CD4-positive, alpha-beta memory T cell (primary cell): ENCODE measurements at regions of chr15 and their contacts with region 1.

Region 1: DNA sequence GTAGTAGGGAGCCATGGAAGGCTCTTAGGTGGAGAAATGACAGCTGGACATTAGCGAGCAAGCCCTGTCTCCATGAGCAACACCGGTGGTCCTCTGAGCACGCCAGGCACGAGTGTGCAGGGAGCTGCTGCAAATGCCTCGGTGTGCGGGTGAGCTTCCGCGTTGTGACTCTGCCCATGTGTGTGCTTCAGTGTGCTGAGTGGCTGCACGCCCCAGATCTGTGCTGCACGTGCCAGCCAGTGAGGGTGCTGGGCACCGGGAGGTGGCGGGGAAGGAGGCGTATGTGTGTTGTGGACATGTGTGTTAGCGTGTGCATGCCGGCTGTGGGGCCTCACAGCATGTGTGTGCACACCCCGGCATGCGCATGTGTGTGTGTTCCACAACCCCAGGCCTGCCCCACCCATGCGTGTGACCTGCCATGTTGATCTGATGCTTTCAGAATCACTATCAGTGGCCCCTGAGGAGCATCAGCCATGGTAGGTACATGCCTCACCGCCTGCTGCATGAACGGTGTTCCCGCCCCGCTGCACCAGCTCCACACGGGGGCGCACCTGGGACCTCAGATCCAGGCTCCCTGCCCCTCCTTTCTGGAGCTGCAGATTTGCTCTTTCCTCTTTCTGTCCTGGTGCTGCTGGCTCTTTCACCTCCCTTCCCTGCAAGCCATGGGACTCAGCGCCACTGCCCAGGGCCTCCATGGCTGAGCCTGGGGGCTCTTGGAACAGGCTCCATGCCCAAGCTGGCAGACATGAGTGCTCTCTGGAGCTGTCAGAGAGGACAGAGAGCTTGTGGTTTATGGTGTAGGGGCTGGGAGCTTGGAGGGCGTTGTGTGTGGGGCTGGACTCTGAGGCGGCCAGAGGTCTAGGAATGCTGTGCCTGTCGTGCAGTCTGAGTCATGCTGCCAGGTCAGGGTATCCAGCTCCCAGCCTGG is 169.4 kb downstream of the TBC1D2B start:
- DNase-seq: peak in 3 of 5 donors; percentile 12 to 36 (median 18)
- H3K4me3 ChIP-seq: no peak overlapping the region
- H3K4me3 Mint-ChIP-seq: no peak overlapping the region
- H3K27ac ChIP-seq: no peak overlapping the region
- H3K27ac Mint-ChIP-seq: no peak overlapping the region
- H3K4me1 ChIP-seq: no peaks in the 10 kb centered on the region
- H3K4me1 Mint-ChIP-seq: no peaks in the 10 kb centered on the region
- H3K27me3 ChIP-seq: no peaks in the 10 kb centered on the region
- H3K27me3 Mint-ChIP-seq: peaks cover 2 to 4% of the 10 kb centered on the region in 2 donors

Region 2: DNA sequence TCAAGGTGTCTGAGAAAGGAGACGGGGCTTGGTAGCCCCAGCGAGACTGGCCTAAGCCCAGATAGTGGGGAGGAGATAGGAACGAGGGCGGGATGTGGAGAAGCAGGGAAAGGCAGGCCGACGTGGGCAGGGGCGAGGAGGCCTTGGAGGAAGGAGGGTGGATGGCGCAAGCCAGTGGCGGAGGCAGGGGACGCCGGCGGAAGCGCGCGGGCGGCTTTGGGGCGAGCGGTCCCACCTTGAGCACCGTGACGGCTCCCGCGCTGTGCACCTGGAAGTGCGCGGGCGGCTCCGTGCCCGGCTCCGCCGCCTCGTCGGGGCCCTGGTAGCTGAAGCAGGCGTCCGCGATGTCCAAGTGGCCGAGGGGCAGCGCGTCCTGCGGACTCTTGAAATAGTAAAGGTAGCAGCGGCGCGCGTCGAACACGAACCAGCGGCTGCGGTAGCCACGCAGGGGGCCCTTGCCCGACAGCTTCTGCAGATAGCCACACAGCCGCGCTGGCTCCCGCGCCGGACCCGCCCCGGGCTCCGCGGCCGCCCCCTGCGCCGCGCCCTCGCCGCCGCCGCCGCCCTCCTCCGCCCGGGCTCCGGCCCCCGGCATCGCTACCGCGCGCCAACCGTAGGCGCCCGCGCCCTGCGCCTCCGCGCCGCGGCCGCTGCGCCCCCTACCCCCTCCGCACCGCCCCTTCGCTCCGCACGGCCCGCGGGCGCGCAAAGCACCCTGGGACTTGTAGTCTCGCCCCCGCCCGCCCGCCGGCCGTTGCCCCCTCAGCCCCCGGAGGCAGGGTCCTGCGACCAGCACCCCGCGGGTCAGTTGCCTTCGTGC is 169.2 kb after region 1 on chr15 and contains the start of gene TBC1D2B:
- CTCF ChIA-PET with region 1: no interaction called
- POLR2A ChIA-PET with region 1: no interaction called
- intact Hi-C with region 1: no loop called
- DNase-seq: peak; percentile 65 to 71 (median 68)
- H3K4me3 ChIP-seq: peak within 1 kb of the TSS; percentile 59 to 89
- H3K4me3 Mint-ChIP-seq: peak within 1 kb of the TSS; percentile 93 to 100 (median 99)
- H3K27ac ChIP-seq: peak within 1 kb of the TSS; percentile 83
- H3K27ac Mint-ChIP-seq: peak within 1 kb of the TSS; percentile 89 to 99 (median 97)
- H3K4me1 ChIP-seq: peaks cover 45% of the 10 kb centered on the region
- H3K4me1 Mint-ChIP-seq: peaks cover 31 to 61% (median 46%) of the 10 kb centered on the region in 4 donors
- H3K27me3 ChIP-seq: no peaks in the 10 kb centered on the region
- H3K27me3 Mint-ChIP-seq: no peaks in the 10 kb centered on the region
- total RNA-seq, gene TBC1D2B: 98.1 to 114 TPM

Region 3: GRCh38 chr15:78737187-78737820 is 829.2 kb after region 1 on chr15:
- CTCF ChIA-PET with region 1: interaction called, 12 read pairs
- POLR2A ChIA-PET with region 1: no interaction called
- intact Hi-C with region 1: no loop called
- DNase-seq: no peak
- H3K4me3 ChIP-seq: no peak overlapping the region
- H3K4me3 Mint-ChIP-seq: no peak overlapping the region
- H3K27ac ChIP-seq: no peak overlapping the region
- H3K27ac Mint-ChIP-seq: no peak overlapping the region
- H3K4me1 ChIP-seq: no peaks in the 10 kb centered on the region
- H3K4me1 Mint-ChIP-seq: peaks cover 0 to 5% (median 1%) of the 10 kb centered on the region in 4 donors
- H3K27me3 ChIP-seq: no peaks in the 10 kb centered on the region
- H3K27me3 Mint-ChIP-seq: peaks cover 2 to 13% of the 10 kb centered on the region in 2 donors